ENCODE measurements at regions of chr18 and their contacts with region 1.

Region 1: DNA sequence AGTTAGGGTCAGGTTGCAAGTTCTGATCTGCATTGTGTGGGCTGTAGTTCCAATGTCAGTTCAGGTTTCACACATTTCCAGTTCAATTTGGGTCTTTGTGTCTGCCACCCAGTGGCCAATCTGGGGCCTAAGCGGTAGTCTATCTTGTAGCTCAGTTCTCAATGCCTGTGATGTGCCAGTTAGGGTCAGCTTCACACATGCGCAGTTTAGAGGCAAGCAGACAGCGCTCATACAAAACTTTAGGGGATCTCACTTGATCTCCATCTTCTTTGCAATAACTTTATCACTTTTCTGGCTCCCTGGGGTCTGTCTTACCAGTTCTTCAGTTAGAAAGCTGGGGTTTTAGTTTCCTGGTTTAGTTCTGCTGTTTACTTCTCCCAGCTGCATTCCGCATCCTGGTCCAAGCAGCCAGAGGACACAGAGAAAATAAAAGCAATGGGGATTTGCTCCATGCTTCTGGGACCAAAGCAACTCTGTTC is 11.0 kb upstream of the ZNF24 start:
- DNase-seq: peak; percentile 71
- H3K4me3 ChIP-seq: peak overlapping the region; percentile 15; the same call in 1 of the 2 replicates
- H3K27ac ChIP-seq: no peak overlapping the region
- H3K27me3 ChIP-seq: no peaks in the 10 kb centered on the region
- CTCF ChIP-seq: peak; percentile 81

Region 2: GRCh38 chr18:34801774-34802173 is 553.4 kb before region 1 on chr18:
- CTCF ChIA-PET with region 1: no interaction called
- POLR2A ChIA-PET with region 1: no interaction called
- DNase-seq: no peak
- H3K4me3 ChIP-seq: no peak overlapping the region
- H3K27ac ChIP-seq: no peak overlapping the region
- H3K27me3 ChIP-seq: no peaks in the 10 kb centered on the region
- CTCF ChIP-seq: no peak

Region 3: GRCh38 chr18:35231052-35231451 is 124.1 kb before region 1 on chr18:
- CTCF ChIA-PET with region 1: interaction called, 46 read pairs
- POLR2A ChIA-PET with region 1: no interaction called
- DNase-seq: peak; percentile 38
- H3K4me3 ChIP-seq: peak overlapping the region; percentile 21
- H3K27ac ChIP-seq: no peak overlapping the region
- H3K27me3 ChIP-seq: no peaks in the 10 kb centered on the region
- CTCF ChIP-seq: peak; percentile 98

Region 4: GRCh38 chr18:35240664-35241447 is 114.3 kb before region 1 on chr18 and contains the start of gene ZNF397:
- CTCF ChIA-PET with region 1: interaction called, 15 read pairs
- POLR2A ChIA-PET with region 1: no interaction called
- DNase-seq: peak; percentile 87
- H3K4me3 ChIP-seq: peak within 1 kb of the TSS; percentile 69
- H3K27ac ChIP-seq: peak within 1 kb of the TSS; percentile 96
- H3K27me3 ChIP-seq: no peaks in the 10 kb centered on the region
- CTCF ChIP-seq: no peak
- polyA plus RNA-seq, gene ZNF397: 9.7 and 11.0 TPM in 2 replicates

Region 5: GRCh38 chr18:35343936-35344735 is 11.0 kb before region 1 on chr18 and contains the start of gene ZNF24:
- CTCF ChIA-PET with region 1: interaction called, 33 read pairs
- POLR2A ChIA-PET with region 1: no interaction called
- DNase-seq: peak; percentile 67
- H3K4me3 ChIP-seq: peak within 1 kb of the TSS; percentile 91
- H3K27ac ChIP-seq: peak within 1 kb of the TSS; percentile 94
- H3K27me3 ChIP-seq: no peaks in the 10 kb centered on the region
- CTCF ChIP-seq: no peak
- polyA plus RNA-seq, gene ZNF24: 18.4 and 25.7 TPM in 2 replicates